ENCODE measurements at regions of chr7 and their contacts with region 1.

Region 1: GRCh38 chr7:47945261-47946001 is 2.8 kb downstream of the PKD1L1 start:
- DNase-seq: peak; percentile 52 to 64 (median 61)
- H3K4me3 ChIP-seq: no peak overlapping the region
- H3K4me3 Mint-ChIP-seq: no peak overlapping the region
- H3K27ac ChIP-seq: no peak overlapping the region
- H3K27ac Mint-ChIP-seq: peak overlapping the region in 1 of 7 donors; percentile 23
- H3K4me1 ChIP-seq: peaks cover 16 to 18% of the 10 kb centered on the region in 2 donors
- H3K4me1 Mint-ChIP-seq: peaks cover 17% of the 10 kb centered on the region
- H3K27me3 ChIP-seq: no peaks in the 10 kb centered on the region
- H3K27me3 Mint-ChIP-seq: peaks cover 4 to 7% (median 4%) of the 10 kb centered on the region in 3 donors
- CTCF ChIP-seq: peak; percentile 81

Region 2: GRCh38 chr7:48154792-48155413 is 209.5 kb after region 1 on chr7:
- intact Hi-C with region 1: loop called in 1 of 2 experiments (anchors 1 kb)
- DNase-seq: no peak
- H3K4me3 ChIP-seq: no peak overlapping the region
- H3K4me3 Mint-ChIP-seq: no peak overlapping the region
- H3K27ac ChIP-seq: no peak overlapping the region
- H3K27ac Mint-ChIP-seq: no peak overlapping the region
- H3K4me1 ChIP-seq: no peaks in the 10 kb centered on the region
- H3K4me1 Mint-ChIP-seq: no peaks in the 10 kb centered on the region
- H3K27me3 ChIP-seq: no peaks in the 10 kb centered on the region
- H3K27me3 Mint-ChIP-seq: peaks cover 0 to 5% (median 0%) of the 10 kb centered on the region in 3 donors
- CTCF ChIP-seq: peak; percentile 51